ENCODE measurements at regions of chr9 and their contacts with region 1.

Region 1: DNA sequence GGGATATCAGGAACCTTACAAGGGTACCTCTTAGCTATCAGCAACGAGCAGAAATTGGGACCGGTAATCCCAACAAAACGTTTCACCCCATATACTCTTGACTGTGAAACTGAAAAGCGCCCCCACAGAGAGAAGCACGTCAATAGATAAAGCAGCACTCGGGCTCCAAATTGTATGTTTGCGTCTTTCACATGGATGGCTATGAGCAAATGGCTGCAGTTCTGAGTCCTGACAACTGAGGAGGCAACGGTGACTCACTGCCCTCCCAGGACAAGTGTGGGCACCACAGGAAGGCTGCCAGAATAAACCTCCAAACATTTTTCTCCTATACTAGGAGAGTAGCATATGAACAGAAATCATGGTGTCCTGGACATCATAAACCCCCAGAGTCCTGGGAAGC is 36.6 kb downstream of the SEMA4D start:
- DNase-seq: peak; percentile 75
- ATAC-seq: peak; percentile 28
- H3K4me3 Mint-ChIP-seq: peak overlapping the region; percentile 22
- H3K27ac Mint-ChIP-seq: peak overlapping the region; percentile 95
- H3K4me1 Mint-ChIP-seq: peaks cover 94% of the 10 kb centered on the region
- H3K27me3 Mint-ChIP-seq: no peaks in the 10 kb centered on the region
- CTCF ChIP-seq: no peak

Region 2: DNA sequence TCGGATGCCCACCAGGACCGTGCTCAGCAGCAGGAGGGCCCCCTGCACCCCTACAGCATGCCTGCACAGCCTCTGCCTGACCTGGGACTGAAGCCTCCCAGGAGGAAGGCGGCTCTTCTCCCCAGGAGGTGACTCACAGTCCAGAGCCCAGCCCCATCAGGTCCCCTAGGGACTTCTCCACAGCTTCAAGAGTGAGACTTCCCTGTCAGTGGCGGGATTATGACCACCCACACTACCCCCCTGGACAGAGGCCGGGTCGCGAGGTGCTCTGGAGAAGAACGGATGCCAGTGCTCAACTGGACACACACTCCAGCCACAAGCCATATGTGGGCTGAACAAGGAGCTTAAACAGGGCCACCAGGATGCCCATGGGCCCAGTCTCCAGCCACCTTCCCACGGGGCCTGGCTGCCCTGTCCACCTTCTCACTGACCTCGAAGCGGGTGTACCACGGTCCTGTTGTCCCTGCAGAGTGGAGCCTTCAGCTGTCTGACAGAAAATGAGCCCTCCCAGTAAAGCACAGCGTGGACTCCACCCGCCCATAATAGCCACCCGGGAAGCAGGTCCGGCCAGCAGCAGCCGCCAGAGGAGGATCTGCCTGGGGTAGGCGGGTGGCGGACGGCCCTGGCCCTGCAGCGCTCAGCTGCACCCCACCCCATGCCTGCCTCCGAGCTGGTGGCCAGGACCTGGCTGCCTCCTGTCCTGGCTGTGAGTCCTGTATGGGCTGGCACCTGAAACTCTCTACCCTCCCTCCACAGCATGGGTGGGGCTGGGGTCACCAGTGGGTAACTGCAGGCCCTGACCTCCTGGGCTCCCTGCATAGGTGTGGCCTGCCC is 18.1 kb before region 1 on chr9:
- CTCF ChIA-PET with region 1: interaction called, 10 read pairs
- POLR2A ChIA-PET with region 1: interaction called, 16 read pairs
- intact Hi-C with region 1: no loop called
- DNase-seq: no peak
- ATAC-seq: no peak
- H3K4me3 Mint-ChIP-seq: no peak overlapping the region
- H3K27ac Mint-ChIP-seq: peak overlapping the region; percentile 93
- H3K4me1 Mint-ChIP-seq: peaks cover 90% of the 10 kb centered on the region
- H3K27me3 Mint-ChIP-seq: no peaks in the 10 kb centered on the region
- CTCF ChIP-seq: no peak

Region 3: DNA sequence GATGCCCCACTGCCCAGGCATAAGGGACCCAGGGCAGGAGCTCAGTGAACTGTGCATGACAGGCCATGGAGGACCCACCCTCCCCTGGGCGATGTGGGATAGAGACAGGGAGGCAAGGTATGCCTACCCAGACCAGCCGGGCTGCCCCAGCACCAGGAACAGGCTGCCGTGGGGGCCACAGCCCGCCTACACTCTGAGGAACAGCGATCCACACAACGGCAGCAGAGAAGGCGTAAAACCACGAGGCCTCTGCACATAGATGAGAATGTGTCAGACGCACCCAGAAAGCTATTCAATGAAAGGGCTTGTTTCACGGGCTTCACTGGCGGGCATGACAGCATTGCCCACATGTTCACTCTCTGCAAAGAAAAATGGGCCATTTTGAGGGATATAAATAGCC is 12.9 kb before region 1 on chr9:
- CTCF ChIA-PET with region 1: interaction called, 4 read pairs
- POLR2A ChIA-PET with region 1: interaction called, 16 read pairs
- intact Hi-C with region 1: no loop called
- DNase-seq: peak; percentile 82
- ATAC-seq: peak; percentile 77
- H3K4me3 Mint-ChIP-seq: peak overlapping the region; percentile 12
- H3K27ac Mint-ChIP-seq: peak overlapping the region; percentile 90
- H3K4me1 Mint-ChIP-seq: peaks cover 95% of the 10 kb centered on the region
- H3K27me3 Mint-ChIP-seq: no peaks in the 10 kb centered on the region
- CTCF ChIP-seq: no peak